Cardiac septum (tissue), 1 donor: ENCODE measurements at regions of chrX and their contacts with region 1.

Region 1: GRCh38 chrX:49043220-49043986 is at the start of gene TFE3:
- DNase-seq: peak; percentile 98
- total RNA-seq, gene TFE3: 21.9 TPM

Region 2: DNA sequence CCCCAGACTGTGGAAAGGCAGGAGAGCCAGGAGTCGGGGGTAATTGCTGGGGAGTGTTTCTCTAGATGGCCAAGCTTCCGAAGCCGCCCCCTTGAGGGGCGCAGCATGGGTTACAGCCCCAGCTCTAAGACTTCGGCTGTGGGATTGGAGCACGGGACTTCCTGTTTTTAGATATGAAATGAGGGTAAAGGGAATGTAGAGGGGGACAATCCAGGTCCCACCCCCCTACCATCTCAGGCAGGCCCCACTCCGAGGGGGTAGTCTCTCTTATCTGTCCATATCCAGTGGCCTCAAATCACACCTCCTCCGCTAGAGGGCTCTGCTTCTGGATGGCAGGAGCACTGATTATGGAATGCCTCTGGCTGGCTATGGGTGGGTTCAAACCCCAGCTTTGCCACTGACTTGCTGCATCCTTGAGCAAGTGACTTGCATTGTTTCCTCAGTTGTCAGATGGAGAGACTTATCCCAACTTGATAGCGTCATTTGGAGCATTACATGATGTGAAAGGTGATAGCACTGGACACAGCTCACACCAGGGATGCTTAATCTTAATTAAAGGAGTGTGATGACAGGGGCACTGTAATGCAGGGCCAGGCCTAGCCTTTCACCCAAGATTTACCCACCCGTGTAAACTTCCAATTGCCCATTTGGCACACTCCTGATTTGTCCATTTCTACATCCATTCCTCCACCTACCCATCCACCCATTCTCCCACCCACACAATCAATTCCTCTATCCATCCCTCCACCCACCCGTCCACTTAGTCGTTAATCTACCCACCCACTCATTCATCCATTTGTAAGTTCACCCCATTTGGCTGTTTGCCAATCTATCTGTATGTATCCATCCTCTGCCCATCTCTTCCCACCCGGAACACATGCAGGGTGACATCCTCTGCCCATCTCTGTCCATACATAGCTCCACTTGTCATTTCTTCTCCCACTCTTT is 70.9 kb before region 1 on chrX:
- intact Hi-C with region 1: loop called (anchors 5 kb)
- DNase-seq: no peak